ENCODE measurements at regions of chr7 and their contacts with region 1.

Region 1: GRCh38 chr7:129091484-129092002 is 36.6 kb upstream of the TNPO3 start:
- DNase-seq: peak; percentile 94
- ATAC-seq: peak; percentile 92
- H3K4me3 Mint-ChIP-seq: no peak overlapping the region
- H3K27ac Mint-ChIP-seq: peak overlapping the region; percentile 73
- H3K4me1 Mint-ChIP-seq: peaks cover 19% of the 10 kb centered on the region
- H3K27me3 Mint-ChIP-seq: peaks cover 1% of the 10 kb centered on the region
- CTCF ChIP-seq: peak; percentile 96

Region 2: DNA sequence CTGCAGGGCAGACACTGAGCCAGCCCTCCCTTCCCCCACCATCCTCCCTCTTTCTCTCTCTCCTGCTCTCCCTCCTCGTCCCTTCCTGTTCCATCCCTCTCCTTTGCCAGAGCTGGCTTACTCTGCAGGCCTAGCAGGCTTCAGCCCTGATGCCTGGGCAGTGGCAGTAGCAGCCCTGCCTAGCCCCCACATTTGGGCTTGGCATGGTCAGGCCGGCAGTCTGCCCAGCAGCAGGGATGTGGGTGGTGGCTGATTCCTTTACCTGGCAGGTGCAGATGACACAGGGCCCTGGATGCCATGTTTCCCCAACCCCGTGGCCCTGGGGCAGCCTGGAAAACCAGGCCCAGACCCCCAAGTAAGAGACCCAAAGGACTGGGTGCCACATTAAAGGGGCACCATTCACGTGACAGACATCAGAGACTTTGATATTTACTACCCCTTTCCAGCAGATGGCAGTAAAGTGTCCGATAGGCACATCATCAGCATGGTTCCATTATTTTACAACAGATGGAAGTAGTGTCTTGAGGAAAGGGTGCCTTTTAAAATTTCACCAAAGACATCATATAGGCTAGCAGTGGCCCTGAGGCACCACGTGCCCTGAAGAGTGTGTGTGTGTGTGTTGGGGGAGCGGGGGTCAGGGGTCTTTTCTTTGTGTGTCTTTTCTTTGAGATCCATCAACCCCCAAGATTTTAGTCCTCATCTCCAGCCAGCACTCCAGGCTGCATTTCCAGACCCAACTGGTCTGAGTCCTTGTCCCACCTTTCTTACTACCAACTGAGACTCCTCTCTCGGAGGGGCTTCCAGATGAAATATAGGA is 187.0 kb before region 1 on chr7:
- CTCF ChIA-PET with region 1: interaction called, 25 read pairs
- POLR2A ChIA-PET with region 1: no interaction called
- intact Hi-C with region 1: loop called (anchors 5 kb)
- DNase-seq: peak; percentile 25
- ATAC-seq: peak; percentile 91
- H3K4me3 Mint-ChIP-seq: no peak overlapping the region
- H3K27ac Mint-ChIP-seq: no peak overlapping the region
- H3K4me1 Mint-ChIP-seq: no peaks in the 10 kb centered on the region
- H3K27me3 Mint-ChIP-seq: peaks cover 24% of the 10 kb centered on the region
- CTCF ChIP-seq: peak; percentile 71

Region 3: GRCh38 chr7:128993419-128993818 is 98.1 kb before region 1 on chr7:
- CTCF ChIA-PET with region 1: interaction called, 10 read pairs
- POLR2A ChIA-PET with region 1: no interaction called
- intact Hi-C with region 1: no loop called
- DNase-seq: no peak
- ATAC-seq: no peak
- H3K4me3 Mint-ChIP-seq: no peak overlapping the region
- H3K27ac Mint-ChIP-seq: no peak overlapping the region
- H3K4me1 Mint-ChIP-seq: no peaks in the 10 kb centered on the region
- H3K27me3 Mint-ChIP-seq: no peaks in the 10 kb centered on the region
- CTCF ChIP-seq: no peak

Region 4: DNA sequence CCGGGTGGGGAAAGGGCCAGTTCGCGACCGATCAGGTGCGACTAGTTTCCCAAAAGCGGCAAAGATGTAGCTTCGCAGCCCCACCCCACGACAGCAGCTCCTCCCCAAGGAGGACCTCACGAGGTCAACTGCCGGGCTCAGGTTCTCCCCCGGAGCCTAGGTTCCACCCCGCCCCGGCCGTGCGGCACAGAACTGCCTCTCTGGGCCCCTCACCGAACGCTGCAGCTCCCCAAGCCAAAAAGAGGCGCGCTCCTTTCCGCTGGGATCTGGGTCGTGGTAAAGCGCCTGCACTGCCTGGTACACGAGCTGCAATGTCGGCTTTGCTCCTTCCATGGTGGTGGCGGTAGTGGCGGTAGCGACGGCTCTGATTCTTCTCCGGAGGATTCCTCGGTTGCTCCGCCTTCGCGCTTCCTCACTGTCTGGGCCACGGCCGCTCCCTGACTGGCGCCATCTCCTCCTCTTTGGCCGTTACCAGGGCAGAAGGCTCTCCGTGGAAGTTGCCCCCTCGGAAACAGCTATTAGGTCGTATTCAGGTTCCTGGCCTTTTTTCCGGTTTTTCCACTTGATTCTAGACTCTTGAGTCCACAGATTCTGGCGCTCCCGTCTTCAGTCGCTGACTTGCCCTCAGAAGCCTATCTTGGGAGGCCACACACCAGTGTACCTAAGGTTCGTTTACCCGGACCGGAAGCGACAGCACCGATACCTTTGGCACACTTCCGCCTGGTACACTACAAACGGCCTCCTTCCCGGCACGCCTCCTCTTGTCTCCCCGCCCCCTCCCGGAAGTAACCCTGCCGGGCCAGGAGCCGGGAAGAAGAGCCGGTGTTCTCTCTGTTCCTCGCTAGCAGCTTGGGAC is 36.9 kb before region 1 on chr7 and contains the start of gene TNPO3:
- CTCF ChIA-PET with region 1: interaction called, 14 read pairs
- POLR2A ChIA-PET with region 1: no interaction called
- intact Hi-C with region 1: no loop called
- DNase-seq: peak; percentile 94
- ATAC-seq: peak; percentile 92
- H3K4me3 Mint-ChIP-seq: peak within 1 kb of the TSS; percentile 90
- H3K27ac Mint-ChIP-seq: peak within 1 kb of the TSS; percentile 99
- H3K4me1 Mint-ChIP-seq: peaks cover 26% of the 10 kb centered on the region
- H3K27me3 Mint-ChIP-seq: no peaks in the 10 kb centered on the region
- CTCF ChIP-seq: no peak
- total RNA-seq, gene TNPO3: 58.4 to 59.3 TPM

Region 5: GRCh38 chr7:129115676-129116075 is 24.1 kb after region 1 on chr7:
- CTCF ChIA-PET with region 1: interaction called, 12 read pairs
- POLR2A ChIA-PET with region 1: no interaction called
- intact Hi-C with region 1: no loop called
- DNase-seq: no peak
- ATAC-seq: no peak
- H3K4me3 Mint-ChIP-seq: no peak overlapping the region
- H3K27ac Mint-ChIP-seq: no peak overlapping the region
- H3K4me1 Mint-ChIP-seq: peaks cover 3% of the 10 kb centered on the region
- H3K27me3 Mint-ChIP-seq: peaks cover 2% of the 10 kb centered on the region
- CTCF ChIP-seq: no peak

Region 6: GRCh38 chr7:129315960-129316359 is 224.4 kb after region 1 on chr7:
- CTCF ChIA-PET with region 1: no interaction called
- POLR2A ChIA-PET with region 1: no interaction called
- intact Hi-C with region 1: no loop called
- DNase-seq: no peak
- ATAC-seq: no peak
- H3K4me3 Mint-ChIP-seq: no peak overlapping the region
- H3K27ac Mint-ChIP-seq: no peak overlapping the region
- H3K4me1 Mint-ChIP-seq: no peaks in the 10 kb centered on the region
- H3K27me3 Mint-ChIP-seq: no peaks in the 10 kb centered on the region
- CTCF ChIP-seq: no peak